PC-9 (cell line): ENCODE measurements at regions of chr11 and their contacts with region 1.

Region 1: DNA sequence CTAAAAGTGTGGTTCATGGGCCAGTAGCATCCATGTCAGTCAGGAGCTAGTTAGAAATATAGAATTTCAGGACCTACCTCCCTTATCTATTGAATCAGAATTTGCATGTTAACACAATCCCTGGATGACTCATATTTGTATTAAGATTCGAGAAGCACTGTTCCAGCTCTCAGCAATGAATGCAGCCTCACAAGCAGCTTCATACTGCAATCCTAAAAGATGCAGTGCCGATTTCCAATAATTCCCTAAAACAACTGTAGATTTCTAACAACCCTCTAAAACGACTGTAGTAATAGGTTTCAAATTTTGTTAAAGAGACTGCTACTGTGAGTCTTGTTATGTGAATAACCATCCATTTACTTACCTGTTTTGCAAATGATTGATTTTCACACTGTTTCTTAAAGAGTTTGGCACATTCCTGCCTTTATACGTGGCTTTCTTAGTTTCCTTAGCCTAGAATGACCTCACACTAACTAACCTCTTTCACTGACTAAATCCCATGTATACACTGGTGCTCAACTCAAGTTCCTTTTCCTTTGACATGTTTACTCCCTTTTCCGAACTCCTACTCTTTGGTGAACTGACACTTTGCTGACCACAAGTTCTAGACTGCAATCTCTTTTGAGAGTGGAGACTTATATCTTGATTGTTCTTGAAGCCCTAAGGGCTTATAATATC is 511.8 kb downstream of the METTL15 start:
- DNase-seq: peak; percentile 24 to 68
- H3K4me3 ChIP-seq: peak overlapping the region; percentile 14; the same call in 1 of the 2 replicates
- H3K27ac ChIP-seq: peak overlapping the region; percentile 54
- H3K4me1 ChIP-seq: peaks cover 16% of the 10 kb centered on the region
- H3K27me3 ChIP-seq: no peaks in the 10 kb centered on the region
- CTCF ChIP-seq: no peak

Region 2: DNA sequence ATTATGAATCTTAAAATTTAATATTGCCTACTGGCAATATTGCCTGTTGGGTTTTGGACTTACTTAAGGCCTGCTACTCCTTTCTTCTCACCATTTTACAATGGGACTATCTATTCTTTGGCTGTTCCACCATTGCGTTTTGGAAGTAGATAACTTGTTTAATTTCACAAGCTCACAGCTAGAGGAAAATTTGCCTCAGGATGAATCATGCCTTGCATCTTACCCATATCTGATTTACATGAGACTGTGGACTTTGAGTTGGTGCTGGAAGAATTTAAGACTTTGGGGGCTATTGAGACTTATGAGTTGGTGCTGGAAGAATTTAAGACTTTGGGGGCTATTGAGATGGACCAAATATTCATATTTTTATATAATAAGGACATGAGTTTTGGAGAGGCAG is 150.8 kb after region 1 on chr11:
- CTCF ChIA-PET with region 1: no interaction called
- POLR2A ChIA-PET with region 1: no interaction called
- intact Hi-C with region 1: no loop called
- DNase-seq: no peak
- H3K4me3 ChIP-seq: no peak overlapping the region
- H3K27ac ChIP-seq: no peak overlapping the region
- H3K4me1 ChIP-seq: no peaks in the 10 kb centered on the region
- H3K27me3 ChIP-seq: no peaks in the 10 kb centered on the region
- CTCF ChIP-seq: no peak

Region 3: GRCh38 chr11:29184939-29185890 is 565.2 kb after region 1 on chr11:
- CTCF ChIA-PET with region 1: no interaction called
- POLR2A ChIA-PET with region 1: interaction called, 17 read pairs
- intact Hi-C with region 1: no loop called
- DNase-seq: peak in 1 of 2 experiments; percentile 43
- H3K4me3 ChIP-seq: no peak overlapping the region
- H3K27ac ChIP-seq: no peak overlapping the region
- H3K4me1 ChIP-seq: no peaks in the 10 kb centered on the region
- H3K27me3 ChIP-seq: no peaks in the 10 kb centered on the region
- CTCF ChIP-seq: no peak